Heart right ventricle (tissue), 16 donors: ENCODE measurements at regions of chrX and their contacts with region 1.

Region 1: DNA sequence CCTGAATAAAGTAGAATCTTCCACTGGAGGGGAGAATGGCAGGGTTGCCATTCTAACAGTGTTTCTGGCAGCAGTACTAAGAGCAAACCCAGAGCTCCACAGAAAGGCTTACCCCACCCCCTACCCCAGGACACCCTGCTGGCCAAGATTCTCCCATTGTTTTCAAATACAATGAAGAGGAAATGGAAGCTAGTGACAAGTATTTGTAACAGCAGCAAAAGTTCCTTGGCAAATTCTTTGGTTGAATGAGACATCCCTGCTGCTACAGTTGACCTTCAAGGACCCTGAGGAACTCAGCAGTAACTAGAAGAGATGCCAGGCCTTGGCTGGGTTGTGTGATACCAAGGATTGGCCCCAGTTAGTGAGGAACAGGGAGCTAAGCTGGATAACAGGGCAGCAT is 124.2 kb upstream of the DGKK start:
- DNase-seq: peak in 1 of 2 donors; percentile 27
- ATAC-seq: peak; percentile 59 to 88 (median 82)
- H3K4me3 ChIP-seq: no peak overlapping the region
- H3K27ac ChIP-seq: peak overlapping the region in 7 of 10 donors; percentile 3 to 75 (median 50)
- H3K4me1 ChIP-seq: peaks cover 0 to 25% (median 7%) of the 10 kb centered on the region in 9 donors
- H3K27me3 ChIP-seq: no peaks in the 10 kb centered on the region
- CTCF ChIP-seq: no peak

Region 2: DNA sequence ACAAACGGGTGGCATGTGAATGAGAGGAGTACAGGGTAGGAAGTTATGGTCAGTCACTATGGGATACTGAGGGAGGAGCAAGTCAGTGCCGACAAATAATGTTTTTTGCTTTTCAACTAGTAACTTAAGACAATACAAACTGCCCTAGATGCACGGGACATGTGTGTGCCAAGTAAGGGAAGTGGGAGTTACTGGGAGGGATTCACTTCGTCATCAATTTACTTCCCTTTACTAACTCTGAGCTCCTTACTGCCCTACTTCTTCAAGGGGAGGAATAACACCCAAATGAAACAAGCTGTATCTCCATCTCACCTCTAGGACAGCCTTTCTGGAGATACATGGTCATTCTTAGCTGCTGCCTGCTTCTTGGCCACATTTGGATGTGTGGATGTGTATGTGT is 221.8 kb before region 1 on chrX:
- intact Hi-C with region 1: no loop called
- DNase-seq: no peak
- ATAC-seq: no peak
- H3K4me3 ChIP-seq: no peak overlapping the region
- H3K27ac ChIP-seq: no peak overlapping the region
- H3K4me1 ChIP-seq: no peaks in the 10 kb centered on the region
- H3K27me3 ChIP-seq: peaks cover 0 to 22% (median 0%) of the 10 kb centered on the region in 7 donors
- CTCF ChIP-seq: no peak

Region 3: DNA sequence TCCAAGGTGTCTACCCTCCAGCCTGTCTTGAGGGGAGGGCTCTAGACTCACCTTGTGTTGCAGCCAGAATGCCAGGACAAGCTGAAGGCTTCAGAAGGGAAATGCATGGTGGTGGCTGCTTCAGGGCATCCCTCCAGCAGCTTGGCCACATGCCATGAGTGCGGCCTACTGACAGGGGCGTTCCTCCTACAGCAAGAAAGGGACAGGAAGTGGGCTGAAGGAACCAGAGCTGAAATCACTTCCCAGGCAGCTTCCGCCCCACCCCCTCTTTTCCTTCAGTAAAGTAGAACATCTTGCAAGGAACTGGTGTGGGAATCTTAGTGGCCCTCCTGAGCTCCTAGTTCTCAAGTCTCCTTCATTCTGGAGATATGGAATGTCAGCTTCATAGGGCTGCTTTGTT is 43.3 kb after region 1 on chrX:
- intact Hi-C with region 1: loop called in 1 of 10 experiments (anchors 5 kb)
- DNase-seq: peak; percentile 48 to 67
- ATAC-seq: peak; percentile 31 to 83 (median 74)
- H3K4me3 ChIP-seq: peak overlapping the region in 3 of 10 donors; percentile 20 to 56 (median 48)
- H3K27ac ChIP-seq: peak overlapping the region in 8 of 10 donors; percentile 10 to 80 (median 51)
- H3K4me1 ChIP-seq: peaks cover 0 to 20% (median 4%) of the 10 kb centered on the region in 9 donors
- H3K27me3 ChIP-seq: no peaks in the 10 kb centered on the region
- CTCF ChIP-seq: no peak